Prostate gland (tissue), 2 donors: ENCODE measurements at regions of chr3 and their contacts with region 1.

Region 1: DNA sequence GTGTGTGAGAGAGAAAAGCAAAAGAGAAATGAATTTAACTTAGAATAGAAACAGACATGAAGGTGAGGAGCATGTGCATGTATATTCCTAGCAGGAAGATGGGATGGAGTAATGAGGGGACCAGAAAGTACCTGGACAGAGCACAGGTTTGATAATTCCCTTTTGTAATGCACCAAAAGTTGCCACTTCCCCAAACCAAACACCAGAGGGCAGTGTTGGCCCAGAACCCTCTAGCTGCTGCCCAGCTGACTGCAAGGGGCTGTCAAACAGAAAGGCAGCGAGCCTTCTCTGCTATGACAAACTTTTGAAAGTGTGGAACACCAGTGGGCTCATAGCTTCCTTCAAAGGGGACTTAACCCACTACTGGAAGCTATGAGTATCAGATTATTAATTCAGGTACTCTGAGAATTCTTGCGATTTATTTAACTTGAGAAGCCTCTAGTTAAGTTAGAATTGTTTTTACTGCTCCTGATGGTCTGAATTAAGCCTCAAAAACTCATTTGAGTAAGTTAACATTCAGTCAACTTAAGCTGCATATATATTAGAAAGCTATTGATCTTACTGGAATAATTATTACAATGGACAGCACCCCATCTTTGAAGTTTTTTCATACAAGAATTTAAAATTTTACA is 234.9 kb downstream of the NEK10 start:
- DNase-seq: peak; percentile 51
- H3K4me3 ChIP-seq: no peak overlapping the region
- H3K27ac ChIP-seq: no peak overlapping the region
- H3K4me1 ChIP-seq: no peaks in the 10 kb centered on the region
- H3K27me3 ChIP-seq: no peaks in the 10 kb centered on the region
- CTCF ChIP-seq: peak; percentile 55 to 87 (median 82)
- POLR2A ChIP-seq: no peak

Region 2: DNA sequence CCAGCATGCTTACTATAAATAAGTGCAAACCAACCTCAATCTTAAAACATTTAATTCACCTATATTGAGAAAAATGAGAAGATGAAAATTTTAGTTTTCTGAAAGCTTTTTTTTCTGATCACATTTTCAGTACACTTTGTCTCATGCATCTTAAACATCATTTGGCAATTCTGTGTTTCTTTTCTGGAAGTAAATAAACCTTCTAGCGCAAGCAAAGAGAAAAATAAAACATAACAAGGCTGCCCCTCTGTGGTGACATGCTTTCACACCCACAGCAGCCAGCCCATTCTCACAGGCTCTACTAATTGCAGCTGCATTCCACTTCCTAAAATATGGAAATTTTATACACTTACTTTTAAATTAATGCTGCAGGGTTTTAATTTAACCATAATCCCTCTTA is 144.8 kb after region 1 on chr3:
- intact Hi-C with region 1: loop called (anchors 5 kb)
- DNase-seq: no peak
- H3K4me3 ChIP-seq: no peak overlapping the region
- H3K27ac ChIP-seq: no peak overlapping the region
- H3K4me1 ChIP-seq: no peaks in the 10 kb centered on the region
- H3K27me3 ChIP-seq: no peaks in the 10 kb centered on the region
- CTCF ChIP-seq: peak in 1 of 4 experiments; percentile 27
- POLR2A ChIP-seq: no peak

Region 3: GRCh38 chr3:27681245-27681748 is 547.0 kb after region 1 on chr3:
- intact Hi-C with region 1: loop called (anchors 10 kb)
- DNase-seq: peak; percentile 24
- H3K4me3 ChIP-seq: no peak overlapping the region
- H3K27ac ChIP-seq: peak overlapping the region; percentile 60 to 63
- H3K4me1 ChIP-seq: no peaks in the 10 kb centered on the region
- H3K27me3 ChIP-seq: no peaks in the 10 kb centered on the region
- CTCF ChIP-seq: peak; percentile 58 to 74 (median 68)
- POLR2A ChIP-seq: no peak